ENCODE measurements at regions of chr7 and their contacts with region 1.

Region 1: GRCh38 chr7:16295558-16295957 is 125.8 kb downstream of the CRPPA start:
- DNase-seq: no peak
- ATAC-seq: no peak
- H3K4me3 ChIP-seq: no peak overlapping the region
- H3K27ac ChIP-seq: no peak overlapping the region
- H3K4me1 ChIP-seq: no peaks in the 10 kb centered on the region
- H3K27me3 ChIP-seq: no peaks in the 10 kb centered on the region
- CTCF ChIP-seq: no peak
- POLR2A ChIP-seq: no peak

Region 2: GRCh38 chr7:16450366-16450765 is 154.8 kb after region 1 on chr7:
- in situ Hi-C with region 1: loop called in 1 of 4 experiments (anchors 10 kb)
- intact Hi-C with region 1: no loop called
- DNase-seq: no peak
- ATAC-seq: no peak
- H3K4me3 ChIP-seq: no peak overlapping the region
- H3K27ac ChIP-seq: no peak overlapping the region
- H3K4me1 ChIP-seq: no peaks in the 10 kb centered on the region
- H3K27me3 ChIP-seq: no peaks in the 10 kb centered on the region
- CTCF ChIP-seq: no peak
- POLR2A ChIP-seq: no peak

Measured in gastrocnemius medialis (tissue), 4 donors.